ENCODE measurements at regions of chr10 and their contacts with region 1.

Region 1: GRCh38 chr10:46223064-46223480 is 63.7 kb upstream of the ANTXRL start:
- DNase-seq: peak; percentile 62
- ATAC-seq: peak; percentile 79
- H3K4me3 Mint-ChIP-seq: no peak overlapping the region
- H3K27ac Mint-ChIP-seq: no peak overlapping the region
- H3K4me1 Mint-ChIP-seq: no peaks in the 10 kb centered on the region
- H3K27me3 Mint-ChIP-seq: no peaks in the 10 kb centered on the region

Region 2: GRCh38 chr10:46234431-46235060 is 11.5 kb after region 1 on chr10:
- CTCF ChIA-PET with region 1: interaction called, 18 read pairs
- POLR2A ChIA-PET with region 1: no interaction called
- intact Hi-C with region 1: loop called in 1 of 2 experiments (anchors 1 kb)
- DNase-seq: no peak
- ATAC-seq: no peak
- H3K4me3 Mint-ChIP-seq: no peak overlapping the region
- H3K27ac Mint-ChIP-seq: no peak overlapping the region
- H3K4me1 Mint-ChIP-seq: peaks cover 7% of the 10 kb centered on the region
- H3K27me3 Mint-ChIP-seq: no peaks in the 10 kb centered on the region

Measured in activated CD4-positive, alpha-beta T cell treated with anti-CD3 and anti-CD28 coated beads for 36 hours (primary cell).